ENCODE measurements at regions of chr6 and their contacts with region 1.

Region 1: DNA sequence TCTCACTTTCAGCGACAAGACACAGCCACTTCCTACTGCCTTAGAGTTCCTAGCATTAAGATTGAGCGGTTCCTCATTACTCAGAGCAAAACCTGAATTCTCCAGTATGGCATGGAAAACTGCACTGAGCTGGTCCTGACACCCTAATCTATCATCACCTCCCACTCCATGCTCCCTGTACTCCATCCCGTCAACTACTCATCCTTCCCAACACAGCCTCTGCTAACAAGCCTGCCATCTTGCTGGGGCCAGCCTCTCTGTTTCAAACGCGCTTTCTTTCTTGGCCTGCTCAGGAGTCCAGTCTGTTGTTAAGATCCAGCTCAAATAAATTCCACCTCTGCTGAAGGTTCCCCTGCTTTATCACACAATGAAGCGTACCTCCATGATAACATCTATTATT is 12.0 kb downstream of the PRKN start:
- DNase-seq: no peak
- ATAC-seq: no peak

Region 2: DNA sequence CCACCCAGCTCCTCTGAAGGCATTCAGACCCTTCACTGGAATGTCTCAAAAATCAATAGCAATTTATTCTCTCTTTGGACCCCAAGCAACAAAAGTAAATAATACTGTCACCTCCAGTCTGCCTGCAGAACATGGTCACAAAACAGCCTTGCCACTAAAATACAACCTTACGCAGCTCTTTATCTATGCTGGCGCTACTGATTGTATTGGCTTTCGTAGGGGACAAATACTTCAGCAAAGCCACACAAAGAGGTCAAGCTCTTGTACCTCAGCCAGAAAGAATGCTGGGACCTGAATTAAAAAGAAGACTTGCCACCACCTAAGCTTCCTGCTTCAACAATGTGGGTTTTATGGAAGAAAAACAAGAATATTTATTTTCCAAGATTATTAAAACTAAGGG is 45.3 kb before region 1 on chr6:
- intact Hi-C with region 1: loop called (anchors 5 kb)
- DNase-seq: no peak
- ATAC-seq: peak; percentile 72

Measured in Right ventricle myocardium inferior (tissue), 1 donor.